Activated CD4-positive, alpha-beta memory T cell treated with anti-CD3 and anti-CD28 coated beads, Interleukin-2, amount 10 ng/mL, durations not matched to agents 7 days and 5 days (primary cell): ENCODE measurements at regions of chr12 and their contacts with region 1.

Region 1: GRCh38 chr12:21438643-21439042 is 1.2 kb downstream of the PYROXD1 start:
- DNase-seq: no peak
- H3K4me3 Mint-ChIP-seq: peak overlapping the region; percentile 93
- H3K27ac Mint-ChIP-seq: peak overlapping the region; percentile 90
- H3K4me1 Mint-ChIP-seq: peaks cover 36% of the 10 kb centered on the region
- H3K27me3 Mint-ChIP-seq: peaks cover 9% of the 10 kb centered on the region

Region 2: GRCh38 chr12:21265932-21266331 is 172.7 kb before region 1 on chr12:
- CTCF ChIA-PET with region 1: no interaction called
- POLR2A ChIA-PET with region 1: no interaction called
- DNase-seq: no peak
- H3K4me3 Mint-ChIP-seq: no peak overlapping the region
- H3K27ac Mint-ChIP-seq: no peak overlapping the region
- H3K4me1 Mint-ChIP-seq: no peaks in the 10 kb centered on the region
- H3K27me3 Mint-ChIP-seq: peaks cover 12% of the 10 kb centered on the region

Region 3: GRCh38 chr12:21384261-21384660 is 54.4 kb before region 1 on chr12:
- CTCF ChIA-PET with region 1: no interaction called
- POLR2A ChIA-PET with region 1: no interaction called
- DNase-seq: no peak
- H3K4me3 Mint-ChIP-seq: no peak overlapping the region
- H3K27ac Mint-ChIP-seq: no peak overlapping the region
- H3K4me1 Mint-ChIP-seq: no peaks in the 10 kb centered on the region
- H3K27me3 Mint-ChIP-seq: no peaks in the 10 kb centered on the region

Region 4: GRCh38 chr12:21451529-21451928 is 12.9 kb after region 1 on chr12:
- CTCF ChIA-PET with region 1: interaction called, 9 read pairs
- POLR2A ChIA-PET with region 1: interaction called, 40 read pairs
- DNase-seq: no peak
- H3K4me3 Mint-ChIP-seq: no peak overlapping the region
- H3K27ac Mint-ChIP-seq: no peak overlapping the region
- H3K4me1 Mint-ChIP-seq: peaks cover 36% of the 10 kb centered on the region
- H3K27me3 Mint-ChIP-seq: no peaks in the 10 kb centered on the region